GM18951 (cell line): ENCODE measurements at regions of chr16 and their contacts with region 1.

Region 1: GRCh38 chr16:57889960-57890751 is 80.8 kb downstream of the CNGB1 start:
- POLR2A ChIP-seq: no peak

Region 2: GRCh38 chr16:57757326-57757786 is 132.8 kb before region 1 on chr16:
- in situ Hi-C with region 1: loop called (anchors 10 kb)
- POLR2A ChIP-seq: no peak

Region 3: GRCh38 chr16:57826706-57827625 is 63.2 kb before region 1 on chr16:
- in situ Hi-C with region 1: no loop called
- POLR2A ChIP-seq: no peak

Region 4: DNA sequence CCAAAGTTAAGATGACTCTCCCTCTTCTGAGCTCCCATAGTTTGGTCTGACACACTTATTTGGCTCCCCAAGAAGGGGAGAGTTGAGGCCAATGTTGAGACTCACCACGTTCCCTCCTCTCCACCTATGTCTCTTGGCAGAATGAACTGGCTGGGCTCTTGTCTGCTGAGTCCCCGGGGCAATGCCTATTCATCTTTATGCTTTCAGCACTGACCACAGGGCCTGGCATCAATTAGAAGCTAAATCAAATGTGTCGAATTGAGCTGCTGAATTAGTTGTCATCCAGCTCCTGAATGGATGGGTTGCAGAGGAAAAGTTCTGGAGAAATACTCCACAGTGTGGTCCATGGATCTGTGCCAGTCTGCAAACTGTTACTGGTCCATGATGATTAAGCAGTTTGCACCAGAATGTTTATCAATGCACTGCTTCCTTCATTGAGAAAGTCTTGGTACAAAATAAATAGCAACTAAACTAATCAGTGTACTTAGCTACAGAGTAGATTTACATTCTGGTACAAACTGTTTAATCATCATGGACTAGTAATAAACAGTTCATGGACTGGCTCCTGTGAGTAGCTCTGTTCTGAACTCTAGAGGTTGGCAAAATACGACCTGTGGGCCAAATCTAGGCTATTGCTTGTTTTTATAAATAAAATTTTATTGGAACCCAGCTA is 76.1 kb after region 1 on chr16:
- in situ Hi-C with region 1: no loop called
- POLR2A ChIP-seq: no peak